Heart right ventricle (tissue), 16 donors: ENCODE measurements at regions of chr12 and their contacts with region 1.

Region 1: GRCh38 chr12:569803-570434 is 93.3 kb downstream of the NINJ2 start:
- DNase-seq: peak; percentile 90 to 91
- ATAC-seq: peak; percentile 69 to 88 (median 80)
- H3K4me3 ChIP-seq: peak overlapping the region; percentile 34 to 78 (median 64)
- H3K27ac ChIP-seq: peak overlapping the region; percentile 86 to 99 (median 93)
- H3K4me1 ChIP-seq: peaks cover 16 to 49% (median 37%) of the 10 kb centered on the region in 9 donors
- H3K27me3 ChIP-seq: no peaks in the 10 kb centered on the region
- CTCF ChIP-seq: peak; percentile 91 to 99 (median 95)

Region 2: GRCh38 chr12:607526-608001 is 37.6 kb after region 1 on chr12:
- intact Hi-C with region 1: no loop called
- DNase-seq: peak; percentile 67 to 91
- ATAC-seq: peak; percentile 61 to 88 (median 82)
- H3K4me3 ChIP-seq: no peak overlapping the region
- H3K27ac ChIP-seq: peak overlapping the region; percentile 41 to 81 (median 71)
- H3K4me1 ChIP-seq: peaks cover 13 to 70% (median 49%) of the 10 kb centered on the region in 9 donors
- H3K27me3 ChIP-seq: no peaks in the 10 kb centered on the region
- CTCF ChIP-seq: no peak

Region 3: GRCh38 chr12:751192-751998 is 181.5 kb after region 1 on chr12:
- intact Hi-C with region 1: loop called in 8 of 10 experiments (anchors 1 to 5 kb)
- DNase-seq: peak; percentile 92 to 94
- ATAC-seq: peak; percentile 55 to 86 (median 72)
- H3K4me3 ChIP-seq: peak overlapping the region; percentile 0 to 94 (median 86)
- H3K27ac ChIP-seq: peak overlapping the region; percentile 81 to 99 (median 98)
- H3K4me1 ChIP-seq: peaks cover 0 to 36% (median 27%) of the 10 kb centered on the region in 9 donors
- H3K27me3 ChIP-seq: no peaks in the 10 kb centered on the region
- CTCF ChIP-seq: peak; percentile 67 to 91 (median 79)

Region 4: DNA sequence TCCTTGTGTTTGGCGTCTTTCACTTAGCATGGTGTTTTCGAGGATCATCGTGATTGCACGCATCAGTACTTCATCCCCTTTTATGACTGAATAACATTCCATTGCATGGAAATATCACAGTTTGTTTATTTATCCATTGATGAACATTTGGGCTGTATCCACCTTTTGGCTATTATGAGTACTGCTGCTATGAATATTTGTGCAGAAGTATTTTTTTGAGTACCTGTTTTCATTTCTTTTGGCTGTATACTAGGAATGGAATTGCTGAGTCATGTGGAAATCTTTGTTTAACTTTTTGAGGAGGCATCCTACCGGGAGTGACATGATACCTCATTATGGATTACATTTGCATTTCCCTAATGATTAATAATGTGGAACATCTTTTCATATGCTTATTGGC is 248.8 kb after region 1 on chr12:
- intact Hi-C with region 1: loop called (anchors 2 to 10 kb)
- DNase-seq: no peak
- ATAC-seq: no peak
- H3K4me3 ChIP-seq: no peak overlapping the region
- H3K27ac ChIP-seq: peak overlapping the region in 3 of 10 donors; percentile 1 to 30 (median 16)
- H3K4me1 ChIP-seq: peaks cover 0 to 38% (median 21%) of the 10 kb centered on the region in 9 donors
- H3K27me3 ChIP-seq: no peaks in the 10 kb centered on the region
- CTCF ChIP-seq: peak in 1 of 9 donors; percentile 6

Region 5: GRCh38 chr12:949453-950191 is 379.7 kb after region 1 on chr12 and contains the start of gene RAD52:
- intact Hi-C with region 1: loop called in 7 of 10 experiments (anchors 1 to 10 kb)
- DNase-seq: peak; percentile 98
- ATAC-seq: peak; percentile 97 to 98 (median 97)
- H3K4me3 ChIP-seq: peak within 1 kb of the TSS; percentile 54 to 96 (median 78)
- H3K27ac ChIP-seq: peak within 1 kb of the TSS; percentile 65 to 96 (median 92)
- H3K4me1 ChIP-seq: peaks cover 0 to 38% (median 11%) of the 10 kb centered on the region in 9 donors
- H3K27me3 ChIP-seq: no peaks in the 10 kb centered on the region
- CTCF ChIP-seq: peak; percentile 96 to 100 (median 98)
- total RNA-seq, gene RAD52: 4.8 to 9.6 (median 6.1) TPM

Region 6: DNA sequence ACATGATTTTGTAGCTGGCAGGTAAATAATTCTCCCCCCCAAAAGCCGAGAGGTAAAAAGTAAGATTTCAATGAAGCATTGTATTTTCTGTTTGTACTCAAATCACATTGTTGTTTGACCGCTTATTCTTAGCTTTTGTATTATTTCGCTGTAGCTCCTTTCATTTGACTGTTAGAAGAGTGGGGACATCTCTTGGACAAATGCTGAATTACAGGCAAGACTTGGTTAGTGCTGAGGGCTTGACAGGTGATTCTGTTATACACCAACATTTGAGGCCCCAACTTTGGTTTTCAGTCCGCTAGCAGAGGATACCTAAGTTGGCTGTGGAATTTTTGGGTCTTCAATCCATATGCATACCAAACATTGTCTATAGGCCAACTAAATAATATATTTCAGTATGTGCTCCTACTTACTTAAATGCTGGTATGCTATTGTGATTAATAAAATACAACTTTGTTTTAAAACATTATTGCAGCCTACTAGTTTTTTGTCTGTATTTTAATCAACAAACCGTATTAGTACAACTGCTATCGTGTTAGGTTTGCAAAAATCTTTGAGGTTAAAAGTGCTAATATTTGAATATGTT is 523.3 kb after region 1 on chr12:
- intact Hi-C with region 1: loop called in 7 of 10 experiments (anchors 5 to 10 kb)
- DNase-seq: peak in 1 of 2 donors; percentile 51
- ATAC-seq: peak in 4 of 8 donors; percentile 56 to 77 (median 64)
- H3K4me3 ChIP-seq: no peak overlapping the region
- H3K27ac ChIP-seq: no peak overlapping the region
- H3K4me1 ChIP-seq: peaks cover 0 to 19% (median 7%) of the 10 kb centered on the region in 9 donors
- H3K27me3 ChIP-seq: no peaks in the 10 kb centered on the region
- CTCF ChIP-seq: peak; percentile 38 to 86 (median 72)

Region 7: DNA sequence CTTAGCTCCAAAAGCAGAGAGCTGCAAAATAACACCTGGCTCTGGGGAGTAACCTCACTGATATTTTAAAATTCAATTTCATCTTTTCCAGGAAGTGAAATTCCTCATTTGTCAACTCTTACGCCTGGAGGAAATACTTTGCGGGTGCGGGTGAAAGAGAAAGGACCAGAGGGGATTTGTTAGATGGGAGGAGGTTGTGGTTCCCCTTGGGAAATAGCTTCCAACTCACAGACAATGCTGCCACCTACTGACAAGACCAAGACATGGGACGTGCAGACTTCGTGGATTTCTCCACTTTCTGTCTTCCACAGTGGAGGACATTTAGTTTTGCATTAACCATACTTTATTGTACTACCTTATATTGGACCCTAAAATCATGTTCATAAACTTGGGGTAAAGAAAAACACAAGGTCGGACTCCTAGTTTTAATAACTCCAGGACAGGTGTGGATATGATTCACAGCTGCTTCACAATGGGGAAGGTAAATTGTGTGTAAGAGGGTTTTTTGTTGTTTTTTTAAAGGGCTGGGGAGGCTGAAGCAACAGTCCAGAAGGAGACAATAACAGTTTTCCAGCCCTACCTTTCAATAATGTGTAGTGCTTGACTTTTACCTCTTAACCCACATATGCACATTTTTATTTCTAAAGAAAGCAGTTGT is 1013.6 kb after region 1 on chr12:
- intact Hi-C with region 1: loop called in 3 of 10 experiments (anchors 10 kb)
- DNase-seq: peak in 1 of 2 donors; percentile 80
- ATAC-seq: peak; percentile 54 to 87 (median 84)
- H3K4me3 ChIP-seq: peak overlapping the region in 6 of 10 donors; percentile 11 to 36 (median 19)
- H3K27ac ChIP-seq: no peak overlapping the region
- H3K4me1 ChIP-seq: peaks cover 6 to 41% (median 26%) of the 10 kb centered on the region in 9 donors
- H3K27me3 ChIP-seq: no peaks in the 10 kb centered on the region
- CTCF ChIP-seq: peak; percentile 53 to 94 (median 90)